ENCODE measurements at regions of chr3 and their contacts with region 1.

Region 1: DNA sequence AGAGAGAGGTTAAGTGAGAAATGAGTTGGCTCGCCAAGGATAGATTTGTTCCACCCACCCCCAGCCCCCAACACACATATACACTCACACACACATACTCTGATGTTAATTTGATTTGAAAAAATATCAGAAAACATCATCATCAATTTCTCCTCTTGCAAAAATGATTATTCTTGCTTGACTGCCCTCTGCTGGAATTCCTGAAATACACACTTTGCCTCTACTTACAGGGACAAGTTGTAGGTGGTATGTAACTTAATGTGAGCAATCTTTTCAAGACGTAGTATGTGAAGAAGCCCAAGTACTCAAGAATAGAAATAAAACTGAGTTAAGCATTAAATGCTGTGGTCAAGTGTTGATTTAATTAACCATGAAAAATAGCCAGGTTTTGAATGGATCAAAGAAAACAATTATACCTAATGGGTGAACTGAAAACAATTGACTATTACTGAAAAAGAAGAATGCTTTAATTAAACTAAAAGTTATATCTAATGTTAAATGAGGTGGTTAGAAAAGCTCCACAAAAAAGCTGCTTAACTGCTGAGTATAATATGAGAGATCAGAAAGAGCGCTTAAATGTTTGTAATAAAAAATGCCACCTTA is 46.6 kb upstream of the MDFIC2 start:
- DNase-seq: peak; percentile 43
- H3K4me3 Mint-ChIP-seq: no peak overlapping the region
- H3K27ac Mint-ChIP-seq: no peak overlapping the region
- H3K4me1 Mint-ChIP-seq: no peaks in the 10 kb centered on the region
- H3K27me3 Mint-ChIP-seq: no peaks in the 10 kb centered on the region
- CTCF ChIP-seq: peak; percentile 48

Region 2: DNA sequence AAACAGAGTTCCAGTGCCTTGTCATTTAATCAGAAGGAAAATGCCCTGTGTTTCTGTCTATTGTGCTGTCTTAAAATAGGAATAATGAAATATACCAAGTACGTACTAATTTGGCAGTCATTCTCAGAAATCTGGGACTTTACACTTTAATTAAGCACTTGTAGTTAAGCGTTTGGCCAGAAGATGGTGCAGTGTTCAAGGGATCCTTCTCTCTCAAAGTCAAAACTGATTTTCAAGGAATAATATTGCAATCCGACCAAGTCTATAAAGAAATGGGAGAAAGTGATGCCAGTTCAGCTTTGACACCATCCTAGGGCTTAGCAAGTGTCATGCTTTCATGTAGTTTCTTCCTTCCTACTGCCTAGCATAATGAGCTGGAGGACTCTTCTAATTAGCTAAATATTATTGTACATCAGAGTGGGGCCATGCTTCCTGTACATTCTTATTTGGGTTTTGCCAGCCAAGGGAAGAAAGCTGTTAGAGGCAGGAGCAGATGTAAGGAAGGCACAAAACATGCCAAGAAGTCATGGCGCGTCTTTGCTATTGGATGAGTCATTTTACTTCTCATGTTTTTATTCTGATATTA is 294.8 kb before region 1 on chr3:
- CTCF ChIA-PET with region 1: no interaction called
- intact Hi-C with region 1: loop called (anchors 1 kb)
- DNase-seq: peak; percentile 42
- H3K4me3 Mint-ChIP-seq: no peak overlapping the region
- H3K27ac Mint-ChIP-seq: no peak overlapping the region
- H3K4me1 Mint-ChIP-seq: no peaks in the 10 kb centered on the region
- H3K27me3 Mint-ChIP-seq: peaks cover 24% of the 10 kb centered on the region
- CTCF ChIP-seq: peak; percentile 35

Region 3: DNA sequence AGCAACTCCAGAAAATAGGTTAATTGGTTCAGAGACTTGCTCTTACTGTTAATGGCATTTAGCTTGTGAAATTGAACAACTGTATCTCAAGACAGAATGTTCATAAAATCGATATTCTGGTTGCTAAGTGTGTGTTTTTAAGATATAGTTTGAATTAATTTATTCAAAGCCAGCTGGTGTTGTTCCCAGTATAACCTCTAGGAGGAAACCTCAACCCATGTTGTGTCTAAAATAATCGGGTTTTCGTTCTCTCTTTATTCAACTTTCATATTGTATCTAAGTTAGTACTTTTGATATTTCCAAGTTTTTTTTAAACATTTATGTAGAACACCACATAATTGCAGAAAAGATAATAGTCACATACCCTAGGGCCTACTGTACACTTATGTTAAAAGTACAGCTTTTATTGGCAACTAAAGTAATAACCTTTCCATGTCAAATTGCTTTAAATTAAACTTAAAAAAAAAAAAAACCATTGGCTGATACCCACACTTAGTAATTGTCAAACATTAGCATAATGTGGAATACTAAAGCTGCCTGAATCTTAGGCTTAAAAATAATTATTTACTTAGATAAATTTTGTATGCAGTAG is 268.7 kb before region 1 on chr3:
- CTCF ChIA-PET with region 1: interaction called, 3 read pairs
- intact Hi-C with region 1: loop called (anchors 1 kb)
- DNase-seq: peak; percentile 17
- H3K4me3 Mint-ChIP-seq: no peak overlapping the region
- H3K27ac Mint-ChIP-seq: no peak overlapping the region
- H3K4me1 Mint-ChIP-seq: no peaks in the 10 kb centered on the region
- H3K27me3 Mint-ChIP-seq: no peaks in the 10 kb centered on the region
- CTCF ChIP-seq: peak; percentile 31

Region 4: GRCh38 chr3:70120357-70121121 is 238.5 kb before region 1 on chr3:
- CTCF ChIA-PET with region 1: interaction called, 5 read pairs
- intact Hi-C with region 1: loop called (anchors 1 kb)
- DNase-seq: peak; percentile 88
- H3K4me3 Mint-ChIP-seq: no peak overlapping the region
- H3K27ac Mint-ChIP-seq: no peak overlapping the region
- H3K4me1 Mint-ChIP-seq: no peaks in the 10 kb centered on the region
- H3K27me3 Mint-ChIP-seq: no peaks in the 10 kb centered on the region
- CTCF ChIP-seq: peak; percentile 78

Region 5: DNA sequence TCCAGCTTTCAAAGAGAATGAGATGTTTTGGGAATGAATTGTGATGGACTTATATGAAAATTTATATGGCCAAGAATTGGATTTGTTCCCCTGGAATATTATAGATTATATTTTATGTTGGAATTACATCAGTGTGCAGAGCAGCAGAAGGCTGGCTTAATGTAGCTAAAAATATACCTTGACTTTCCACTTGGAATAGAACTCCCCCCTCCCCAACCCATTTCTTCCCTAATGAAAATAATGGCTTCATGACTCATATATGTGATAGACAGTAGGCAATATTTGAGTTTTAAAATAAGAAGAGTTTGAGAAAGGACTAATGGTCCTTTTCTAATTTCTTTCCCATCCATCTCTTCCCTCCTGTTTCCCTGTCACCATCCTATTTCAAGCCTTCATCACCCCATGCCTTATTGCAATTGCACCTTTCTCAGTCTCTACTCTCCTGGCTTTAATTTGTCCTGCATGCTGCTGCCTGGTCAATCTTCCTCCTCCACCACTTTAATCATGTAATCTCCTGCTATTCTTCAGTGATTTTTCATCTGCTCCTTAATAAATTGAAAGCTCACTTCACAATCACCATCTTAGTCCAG is 169.1 kb before region 1 on chr3:
- CTCF ChIA-PET with region 1: no interaction called
- intact Hi-C with region 1: loop called (anchors 10 kb)
- DNase-seq: no peak
- H3K4me3 Mint-ChIP-seq: no peak overlapping the region
- H3K27ac Mint-ChIP-seq: no peak overlapping the region
- H3K4me1 Mint-ChIP-seq: no peaks in the 10 kb centered on the region
- H3K27me3 Mint-ChIP-seq: no peaks in the 10 kb centered on the region
- CTCF ChIP-seq: no peak

Region 6: DNA sequence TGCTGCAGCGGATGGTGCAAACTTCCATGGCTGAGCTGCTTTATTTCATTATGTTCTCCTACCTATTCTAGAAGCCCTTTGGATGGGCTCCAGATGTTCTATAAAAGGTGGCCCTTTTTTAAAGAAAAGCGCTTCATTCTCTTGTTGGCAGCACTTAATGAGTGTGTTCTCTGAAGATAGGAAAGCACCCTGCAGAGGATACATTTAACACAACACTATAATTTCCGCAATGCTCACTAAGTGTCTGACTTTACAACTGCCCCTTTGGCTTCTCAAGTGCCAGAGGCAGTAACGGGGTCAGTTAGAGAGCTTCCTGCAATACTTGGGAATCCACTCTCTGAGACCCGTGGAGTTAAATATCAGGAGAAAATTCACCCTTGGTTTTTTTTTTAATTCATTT is 134.7 kb before region 1 on chr3:
- CTCF ChIA-PET with region 1: no interaction called
- intact Hi-C with region 1: no loop called
- DNase-seq: no peak
- H3K4me3 Mint-ChIP-seq: no peak overlapping the region
- H3K27ac Mint-ChIP-seq: no peak overlapping the region
- H3K4me1 Mint-ChIP-seq: no peaks in the 10 kb centered on the region
- H3K27me3 Mint-ChIP-seq: no peaks in the 10 kb centered on the region
- CTCF ChIP-seq: no peak

Region 7: GRCh38 chr3:70291097-70291482 is 68.0 kb before region 1 on chr3:
- CTCF ChIA-PET with region 1: no interaction called
- intact Hi-C with region 1: no loop called
- DNase-seq: no peak
- H3K4me3 Mint-ChIP-seq: no peak overlapping the region
- H3K27ac Mint-ChIP-seq: no peak overlapping the region
- H3K4me1 Mint-ChIP-seq: no peaks in the 10 kb centered on the region
- H3K27me3 Mint-ChIP-seq: no peaks in the 10 kb centered on the region
- CTCF ChIP-seq: no peak

Region 8: GRCh38 chr3:70342149-70342548 is 16.9 kb before region 1 on chr3:
- CTCF ChIA-PET with region 1: no interaction called
- intact Hi-C with region 1: no loop called
- DNase-seq: no peak
- H3K4me3 Mint-ChIP-seq: no peak overlapping the region
- H3K27ac Mint-ChIP-seq: no peak overlapping the region
- H3K4me1 Mint-ChIP-seq: no peaks in the 10 kb centered on the region
- H3K27me3 Mint-ChIP-seq: no peaks in the 10 kb centered on the region
- CTCF ChIP-seq: no peak

Region 9: GRCh38 chr3:70531063-70531657 is 172.1 kb after region 1 on chr3:
- CTCF ChIA-PET with region 1: no interaction called
- intact Hi-C with region 1: no loop called
- DNase-seq: no peak
- H3K4me3 Mint-ChIP-seq: no peak overlapping the region
- H3K27ac Mint-ChIP-seq: no peak overlapping the region
- H3K4me1 Mint-ChIP-seq: no peaks in the 10 kb centered on the region
- H3K27me3 Mint-ChIP-seq: peaks cover 30% of the 10 kb centered on the region
- CTCF ChIP-seq: no peak

Measured in Calu3 (cell line).